Activated T-helper 2 cell treated with anti-CD3 and anti-CD28 coated beads, Interferon-gamma antibody, Interleukin-2, Interleukin-4, amounts not matched to agents 10 μg/mL and 5 μg/mL and 100 μg/mL, durations not matched to agents 14 hours and 24 hours and 36 hours (primary cell): ENCODE measurements at regions of chr7 and their contacts with region 1.

Region 1: DNA sequence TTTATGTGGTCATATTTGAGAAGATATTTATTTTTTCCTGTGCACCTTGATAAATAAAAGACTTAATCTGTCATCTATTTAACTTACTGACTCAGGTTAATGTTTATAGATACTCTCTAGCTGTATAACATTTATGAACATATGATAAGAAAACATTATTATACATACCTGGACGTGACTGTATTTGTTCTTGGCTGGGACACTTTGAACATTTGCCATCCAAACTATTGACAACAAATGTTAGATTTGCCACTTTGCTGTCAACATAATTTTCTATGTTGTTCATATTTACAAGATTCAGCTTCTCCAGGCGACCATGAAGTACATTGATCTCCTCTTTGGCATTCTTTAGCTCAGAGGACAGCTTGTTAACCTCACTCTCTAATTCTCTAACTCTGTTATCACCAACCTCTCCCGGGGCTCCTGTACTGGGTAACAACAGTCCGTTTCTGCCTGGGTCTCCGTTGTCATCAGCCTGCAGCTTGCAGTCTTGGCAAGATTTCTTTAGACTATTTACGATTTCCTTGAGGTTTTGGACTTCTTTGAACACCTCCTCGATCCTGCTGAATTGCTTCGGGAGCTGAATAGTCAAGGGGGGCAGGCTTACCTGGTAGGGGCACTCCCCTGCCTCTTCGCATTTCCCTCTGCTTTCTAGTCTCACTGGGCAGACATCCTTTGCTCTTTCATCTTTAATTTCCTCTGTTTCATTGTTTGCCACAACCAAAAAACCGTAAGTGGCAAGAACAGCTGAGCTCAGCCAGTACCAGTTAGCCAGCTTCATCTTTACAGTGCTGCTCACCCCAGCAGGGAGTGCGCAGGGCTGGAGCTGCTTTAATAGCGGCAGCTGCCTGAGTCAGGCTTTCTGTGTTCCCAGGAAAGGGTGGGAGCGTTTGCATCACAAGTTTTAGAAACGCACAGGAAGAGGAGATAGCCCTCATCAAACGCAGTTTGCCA is at the start of gene FGL2:
- DNase-seq: no peak
- H3K4me3 Mint-ChIP-seq: peak within 1 kb of the TSS; percentile 88
- H3K27ac Mint-ChIP-seq: peak within 1 kb of the TSS; percentile 65
- H3K4me1 Mint-ChIP-seq: peaks cover 49% of the 10 kb centered on the region
- H3K27me3 Mint-ChIP-seq: no peaks in the 10 kb centered on the region
- total RNA-seq, gene FGL2: 1.1 and 1.2 TPM in 2 replicates

Region 2: GRCh38 chr7:77157446-77157845 is 41.8 kb before region 1 on chr7:
- intact Hi-C with region 1: loop called (anchors 5 kb)
- DNase-seq: peak; percentile 12
- H3K4me3 Mint-ChIP-seq: peak overlapping the region; percentile 0
- H3K27ac Mint-ChIP-seq: peak overlapping the region; percentile 90
- H3K4me1 Mint-ChIP-seq: peaks cover 29% of the 10 kb centered on the region
- H3K27me3 Mint-ChIP-seq: no peaks in the 10 kb centered on the region

Region 3: GRCh38 chr7:77188731-77189437 is 10.4 kb before region 1 on chr7:
- intact Hi-C with region 1: loop called (anchors 1 kb)
- DNase-seq: no peak
- H3K4me3 Mint-ChIP-seq: no peak overlapping the region
- H3K27ac Mint-ChIP-seq: no peak overlapping the region
- H3K4me1 Mint-ChIP-seq: peaks cover 19% of the 10 kb centered on the region
- H3K27me3 Mint-ChIP-seq: no peaks in the 10 kb centered on the region

Region 4: GRCh38 chr7:77222065-77222464 is 22.8 kb after region 1 on chr7:
- intact Hi-C with region 1: no loop called
- DNase-seq: no peak
- H3K4me3 Mint-ChIP-seq: no peak overlapping the region
- H3K27ac Mint-ChIP-seq: no peak overlapping the region
- H3K4me1 Mint-ChIP-seq: peaks cover 5% of the 10 kb centered on the region
- H3K27me3 Mint-ChIP-seq: no peaks in the 10 kb centered on the region

Region 5: GRCh38 chr7:77247206-77247850 is 48.0 kb after region 1 on chr7:
- intact Hi-C with region 1: loop called (anchors 5 kb)
- DNase-seq: peak; percentile 73
- H3K4me3 Mint-ChIP-seq: no peak overlapping the region
- H3K27ac Mint-ChIP-seq: no peak overlapping the region
- H3K4me1 Mint-ChIP-seq: peaks cover 12% of the 10 kb centered on the region
- H3K27me3 Mint-ChIP-seq: peaks cover 14% of the 10 kb centered on the region